Panc1 (cell line): ENCODE measurements at regions of chr7 and their contacts with region 1.

Region 1: GRCh38 chr7:2157468-2158279 is 75.1 kb downstream of the MAD1L1 start:
- DNase-seq: peak; percentile 32
- ATAC-seq: peak; percentile 90
- H3K4me3 ChIP-seq: no peak overlapping the region
- H3K27ac ChIP-seq: 0 out of 2 replicates have a peak overlapping the region, but pooled peaks have one; percentile 19
- H3K4me1 ChIP-seq: peaks cover 27% of the 10 kb centered on the region
- H3K27me3 ChIP-seq: no peaks in the 10 kb centered on the region
- CTCF ChIP-seq: no peak

Region 2: DNA sequence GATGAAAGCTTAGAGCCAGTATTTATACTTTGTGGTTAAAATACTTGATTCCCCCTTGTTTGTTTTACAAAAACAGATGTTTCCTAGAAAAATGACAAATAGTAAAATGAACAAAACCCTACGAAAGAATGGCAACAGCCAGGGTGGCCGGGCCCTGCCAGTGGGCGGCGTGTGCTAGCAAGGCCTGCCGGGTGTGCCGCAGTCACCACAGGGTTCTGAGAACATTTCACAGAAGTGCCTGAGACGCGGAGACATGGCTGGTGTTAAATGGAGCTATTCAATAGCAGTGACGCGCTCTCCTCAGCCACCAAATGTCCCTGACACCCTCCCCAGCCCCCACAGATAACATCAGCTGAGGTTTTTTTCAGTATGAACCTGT is 1098.9 kb before region 1 on chr7:
- CTCF ChIA-PET with region 1: no interaction called
- POLR2A ChIA-PET with region 1: interaction called, 12 read pairs
- in situ Hi-C with region 1: no loop called
- intact Hi-C with region 1: no loop called
- DNase-seq: no peak
- ATAC-seq: no peak
- H3K4me3 ChIP-seq: no peak overlapping the region
- H3K27ac ChIP-seq: no peak overlapping the region
- H3K4me1 ChIP-seq: peaks cover 7% of the 10 kb centered on the region; the same call in 1 of the 2 replicates
- H3K27me3 ChIP-seq: no peaks in the 10 kb centered on the region
- CTCF ChIP-seq: no peak

Region 3: DNA sequence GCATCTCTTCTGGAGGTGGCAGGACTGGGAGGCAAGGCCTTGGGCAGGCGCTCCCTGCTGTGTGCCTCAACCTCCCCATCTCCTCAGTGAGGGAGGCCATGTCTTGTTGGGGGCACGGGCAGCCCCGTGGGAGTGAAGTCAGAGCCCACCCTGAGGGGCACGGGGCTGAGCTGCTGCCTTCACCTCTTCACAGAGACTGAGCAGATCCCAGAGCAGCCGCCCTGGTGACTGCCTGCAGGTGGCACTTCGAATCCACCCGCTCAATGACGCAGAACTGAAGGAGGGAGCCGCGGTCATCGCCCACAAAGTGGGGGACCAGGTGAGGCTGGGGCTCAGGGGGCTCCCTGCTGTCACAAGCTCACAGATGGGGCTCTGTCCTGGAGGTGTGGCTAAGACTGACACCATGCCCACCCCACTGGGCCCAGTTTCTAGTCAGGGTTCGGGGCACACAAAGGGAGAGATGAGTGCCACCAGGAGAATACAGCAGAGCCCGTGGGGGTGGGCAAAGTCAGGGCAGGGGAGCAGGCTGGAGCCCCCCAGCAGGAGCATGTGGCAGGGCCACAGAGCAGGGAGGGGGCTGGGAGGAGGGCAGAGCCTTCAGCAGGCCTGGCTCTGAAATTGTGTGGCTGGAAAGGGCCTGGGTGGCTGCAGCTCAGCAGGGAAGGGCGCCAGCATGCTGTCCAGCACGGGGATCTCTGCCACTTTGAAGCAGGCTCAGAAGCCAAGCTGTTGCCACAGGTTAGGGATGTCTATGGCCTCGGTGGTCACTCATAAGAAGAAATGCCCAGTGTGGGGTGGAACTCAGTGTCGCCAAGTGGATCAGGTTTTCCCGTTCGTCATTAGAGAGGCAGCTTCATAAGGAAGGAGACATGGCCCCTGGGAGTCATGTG is 226.9 kb after region 1 on chr7:
- CTCF ChIA-PET with region 1: no interaction called
- POLR2A ChIA-PET with region 1: no interaction called
- in situ Hi-C with region 1: no loop called
- intact Hi-C with region 1: no loop called
- DNase-seq: no peak
- ATAC-seq: peak; percentile 52
- H3K4me3 ChIP-seq: no peak overlapping the region
- H3K27ac ChIP-seq: no peak overlapping the region
- H3K4me1 ChIP-seq: no peaks in the 10 kb centered on the region
- H3K27me3 ChIP-seq: no peaks in the 10 kb centered on the region
- CTCF ChIP-seq: no peak

Region 4: DNA sequence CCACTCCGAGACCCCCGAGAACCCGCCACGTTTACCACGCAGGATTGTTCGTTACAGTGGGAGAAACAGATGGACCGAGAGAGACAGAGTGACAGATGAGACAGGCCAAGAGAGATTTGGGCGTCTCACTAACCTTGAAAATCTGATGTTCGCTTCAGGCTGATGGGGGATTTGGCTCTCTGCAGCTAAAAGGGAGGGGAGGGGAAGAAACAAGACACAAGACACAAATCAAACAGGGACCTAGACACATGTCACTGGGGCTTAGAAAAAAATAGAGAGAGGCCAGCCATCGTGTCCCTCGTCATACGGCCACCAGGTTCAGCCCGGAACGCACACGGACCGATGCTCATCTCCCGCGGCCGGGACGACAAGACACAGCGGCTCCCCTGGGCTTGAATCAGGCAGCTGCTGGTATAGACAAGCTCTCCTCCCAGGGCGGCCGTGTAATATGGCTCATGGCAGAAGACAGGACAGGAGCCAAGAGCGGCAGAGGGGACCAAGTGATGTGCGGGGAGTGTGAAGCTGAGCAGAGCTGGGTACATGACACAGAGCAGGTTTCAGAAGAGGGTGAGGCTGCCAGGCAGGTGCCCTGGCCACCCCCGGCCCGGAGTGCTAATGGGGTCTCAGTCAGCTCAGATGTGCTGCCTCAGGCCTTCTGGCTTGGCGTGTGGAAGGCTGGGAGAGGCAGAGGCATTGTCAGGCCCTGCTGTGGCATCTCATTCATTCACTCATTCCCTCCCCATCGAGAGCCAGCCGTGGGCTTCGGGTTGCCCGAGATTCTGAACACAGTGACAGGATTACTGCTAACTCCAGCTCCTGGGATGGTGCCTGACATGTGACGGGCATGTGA is 775.0 kb after region 1 on chr7:
- CTCF ChIA-PET with region 1: no interaction called
- POLR2A ChIA-PET with region 1: interaction called, 11 read pairs
- in situ Hi-C with region 1: no loop called
- intact Hi-C with region 1: no loop called
- DNase-seq: no peak
- ATAC-seq: peak; percentile 40
- H3K4me3 ChIP-seq: no peak overlapping the region
- H3K27ac ChIP-seq: no peak overlapping the region
- H3K4me1 ChIP-seq: no peaks in the 10 kb centered on the region
- H3K27me3 ChIP-seq: no peaks in the 10 kb centered on the region
- CTCF ChIP-seq: no peak